ENCODE measurements at regions of chr4 and their contacts with region 1.

Region 1: GRCh38 chr4:184733654-184734524 is at the start of gene CENPU:
- DNase-seq: peak; percentile 96
- H3K4me3 Mint-ChIP-seq: peak within 1 kb of the TSS; percentile 94
- H3K27ac Mint-ChIP-seq: peak within 1 kb of the TSS; percentile 95
- H3K4me1 Mint-ChIP-seq: peaks cover 50% of the 10 kb centered on the region
- H3K27me3 Mint-ChIP-seq: no peaks in the 10 kb centered on the region
- total RNA-seq, gene CENPU: 78.3 and 80.3 TPM in 2 replicates

Region 2: GRCh38 chr4:183659029-183659871 is 1074.6 kb before region 1 on chr4 and contains the starts of genes RWDD4 and TRAPPC11:
- intact Hi-C with region 1: loop called (anchors 2 kb)
- DNase-seq: peak; percentile 95
- H3K4me3 Mint-ChIP-seq: peak within 1 kb of the TSS; percentile 100
- H3K27ac Mint-ChIP-seq: peak within 1 kb of the TSS; percentile 96
- H3K4me1 Mint-ChIP-seq: peaks cover 32% of the 10 kb centered on the region
- H3K27me3 Mint-ChIP-seq: no peaks in the 10 kb centered on the region
- total RNA-seq, gene RWDD4: 23.9 and 24.2 TPM in 2 replicates
- total RNA-seq, gene TRAPPC11: 23.0 and 33.7 TPM in 2 replicates

Region 3: DNA sequence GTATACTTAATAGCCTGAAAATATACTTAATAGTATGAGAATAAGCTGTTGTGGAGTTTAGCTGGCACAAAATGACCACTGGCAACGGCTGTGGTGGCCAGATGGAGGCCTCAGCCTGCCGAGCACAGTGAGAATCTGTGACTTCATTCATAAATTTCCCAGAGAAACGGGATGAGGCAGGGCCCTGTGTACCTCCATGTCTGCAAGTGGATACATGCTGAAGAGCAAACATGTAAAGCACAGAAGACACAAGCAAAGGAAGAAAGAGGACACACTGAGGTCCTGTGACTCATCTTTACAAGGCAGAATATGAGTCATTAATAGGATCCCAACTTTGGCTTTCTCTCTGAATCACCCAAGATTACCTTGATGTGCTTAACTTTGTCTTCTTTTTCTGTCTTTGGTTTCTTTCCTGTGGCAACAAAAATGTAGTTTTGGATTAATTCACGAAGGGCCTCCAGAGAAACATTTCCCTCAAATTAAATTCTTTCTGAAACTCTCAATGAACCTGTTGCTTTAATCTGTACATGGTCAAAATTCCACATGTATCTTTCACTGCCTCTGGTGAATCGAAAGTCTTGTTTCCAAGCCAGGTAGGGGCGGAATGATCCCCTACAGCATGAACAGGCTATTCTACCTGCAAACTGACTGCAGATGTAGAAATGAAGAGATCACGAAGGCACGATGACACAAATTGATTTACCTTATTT is 315.9 kb before region 1 on chr4:
- intact Hi-C with region 1: loop called (anchors 1 kb)
- DNase-seq: peak; percentile 21
- H3K4me3 Mint-ChIP-seq: peak overlapping the region; percentile 78
- H3K27ac Mint-ChIP-seq: peak overlapping the region; percentile 95
- H3K4me1 Mint-ChIP-seq: peaks cover 90% of the 10 kb centered on the region
- H3K27me3 Mint-ChIP-seq: no peaks in the 10 kb centered on the region

Region 4: GRCh38 chr4:184664448-184665210 is 69.3 kb before region 1 on chr4:
- intact Hi-C with region 1: no loop called
- DNase-seq: no peak
- H3K4me3 Mint-ChIP-seq: no peak overlapping the region
- H3K27ac Mint-ChIP-seq: no peak overlapping the region
- H3K4me1 Mint-ChIP-seq: peaks cover 34% of the 10 kb centered on the region
- H3K27me3 Mint-ChIP-seq: no peaks in the 10 kb centered on the region

Region 5: GRCh38 chr4:184762100-184762499 is 28.2 kb after region 1 on chr4:
- intact Hi-C with region 1: loop called (anchors 1 kb)
- DNase-seq: peak; percentile 59
- H3K4me3 Mint-ChIP-seq: peak overlapping the region; percentile 16
- H3K27ac Mint-ChIP-seq: peak overlapping the region; percentile 85
- H3K4me1 Mint-ChIP-seq: peaks cover 33% of the 10 kb centered on the region
- H3K27me3 Mint-ChIP-seq: no peaks in the 10 kb centered on the region

Region 6: DNA sequence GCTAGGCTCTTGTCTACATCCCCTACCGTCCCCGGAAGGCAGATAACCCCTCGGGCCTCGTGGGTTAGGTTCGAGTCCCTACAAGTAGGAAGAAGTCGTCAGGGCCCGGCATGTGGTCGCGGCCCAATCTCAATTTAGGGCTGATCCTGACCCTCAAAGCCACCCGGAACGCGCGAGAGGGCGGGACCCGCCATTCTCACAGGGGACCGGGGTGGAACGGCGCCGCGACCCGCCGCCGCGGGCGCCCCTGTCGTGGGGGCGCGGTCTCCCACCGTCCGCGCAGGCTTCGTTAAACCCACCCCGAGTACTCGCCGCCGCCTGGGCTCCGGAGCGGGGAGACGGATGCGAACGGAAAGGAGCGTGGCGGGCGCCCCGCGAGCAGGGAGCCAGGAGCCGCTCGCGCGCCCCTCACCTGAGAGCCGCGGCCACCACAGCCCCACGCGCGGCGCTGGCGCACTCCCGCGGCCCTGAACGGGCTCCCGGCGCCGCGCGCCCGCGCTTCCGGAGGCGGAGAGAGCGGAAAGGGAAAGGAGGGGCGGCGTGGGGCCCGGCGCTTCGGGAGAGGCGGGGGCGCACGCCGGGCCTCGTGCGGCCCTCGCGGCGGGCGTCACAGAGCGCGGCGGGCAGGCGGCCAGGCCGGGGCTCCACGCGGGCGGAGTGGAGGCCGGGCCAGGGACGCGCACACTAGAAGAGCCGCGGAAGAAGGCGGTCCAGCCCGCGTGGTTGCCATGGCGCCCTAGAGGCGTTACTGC is 469.8 kb after region 1 on chr4 and contains the start of gene CFAP97:
- intact Hi-C with region 1: loop called (anchors 1 kb)
- DNase-seq: peak; percentile 75
- H3K4me3 Mint-ChIP-seq: peak within 1 kb of the TSS; percentile 99
- H3K27ac Mint-ChIP-seq: peak within 1 kb of the TSS; percentile 100
- H3K4me1 Mint-ChIP-seq: peaks cover 36% of the 10 kb centered on the region
- H3K27me3 Mint-ChIP-seq: peaks cover 1% of the 10 kb centered on the region
- total RNA-seq, gene CFAP97: 52.4 and 54.6 TPM in 2 replicates

Region 7: DNA sequence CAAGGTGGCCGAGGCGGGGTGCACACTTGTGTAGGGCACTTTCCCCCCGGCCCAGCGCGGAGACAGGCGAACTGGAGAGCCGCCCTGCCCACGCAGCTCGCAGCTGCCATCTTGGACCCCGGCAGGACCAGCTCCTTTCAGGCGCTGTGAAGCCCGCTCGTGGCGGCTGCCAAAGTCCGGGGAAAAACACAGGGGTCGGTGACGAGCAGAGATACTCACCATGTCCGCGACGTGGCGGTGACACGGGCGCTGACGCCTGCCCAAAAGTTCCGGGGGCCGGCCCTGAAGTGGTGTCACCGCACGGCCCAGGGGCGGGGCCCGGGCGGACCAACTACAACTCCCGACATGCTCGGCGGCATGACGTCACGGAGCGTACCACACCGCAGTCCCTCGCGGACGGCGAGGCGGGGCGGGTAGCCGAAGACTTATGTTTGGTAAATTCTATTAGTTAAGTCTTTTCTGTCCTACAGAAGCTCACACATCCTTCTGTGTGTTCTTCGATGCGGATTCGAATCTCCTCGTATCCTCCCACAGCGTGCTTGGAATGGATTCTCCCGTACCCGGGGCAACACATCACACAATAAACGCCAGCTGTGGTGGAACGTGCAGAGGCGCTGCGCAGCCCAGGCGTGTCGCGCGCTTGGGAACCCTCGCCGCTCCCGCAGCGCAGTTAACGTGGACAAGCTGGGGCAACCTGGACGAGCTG is 691.9 kb after region 1 on chr4 and contains the start of gene UFSP2:
- intact Hi-C with region 1: loop called (anchors 10 kb)
- DNase-seq: peak; percentile 86
- H3K4me3 Mint-ChIP-seq: peak within 1 kb of the TSS; percentile 88
- H3K27ac Mint-ChIP-seq: peak within 1 kb of the TSS; percentile 92
- H3K4me1 Mint-ChIP-seq: peaks cover 35% of the 10 kb centered on the region
- H3K27me3 Mint-ChIP-seq: peaks cover 7% of the 10 kb centered on the region
- total RNA-seq, gene UFSP2: 19.8 and 19.9 TPM in 2 replicates

Measured in activated T-helper 1 cell treated with anti-CD3 and anti-CD28 coated beads, Interleukin-12 subunit alpha, Interleukin-12 subunit beta, Interleukin-2, Interleukin-4 antibody, amounts not matched to agents 30 ng/mL and 10 ng/mL and 1 ng/mL, durations not matched to agents 14 hours and 24 hours and 36 hours (primary cell).